Activated naive CD4-positive, alpha-beta T cell treated with anti-CD3 and anti-CD28 coated beads for 36 hours (primary cell): ENCODE measurements at regions of chr3 and their contacts with region 1.

Region 1: DNA sequence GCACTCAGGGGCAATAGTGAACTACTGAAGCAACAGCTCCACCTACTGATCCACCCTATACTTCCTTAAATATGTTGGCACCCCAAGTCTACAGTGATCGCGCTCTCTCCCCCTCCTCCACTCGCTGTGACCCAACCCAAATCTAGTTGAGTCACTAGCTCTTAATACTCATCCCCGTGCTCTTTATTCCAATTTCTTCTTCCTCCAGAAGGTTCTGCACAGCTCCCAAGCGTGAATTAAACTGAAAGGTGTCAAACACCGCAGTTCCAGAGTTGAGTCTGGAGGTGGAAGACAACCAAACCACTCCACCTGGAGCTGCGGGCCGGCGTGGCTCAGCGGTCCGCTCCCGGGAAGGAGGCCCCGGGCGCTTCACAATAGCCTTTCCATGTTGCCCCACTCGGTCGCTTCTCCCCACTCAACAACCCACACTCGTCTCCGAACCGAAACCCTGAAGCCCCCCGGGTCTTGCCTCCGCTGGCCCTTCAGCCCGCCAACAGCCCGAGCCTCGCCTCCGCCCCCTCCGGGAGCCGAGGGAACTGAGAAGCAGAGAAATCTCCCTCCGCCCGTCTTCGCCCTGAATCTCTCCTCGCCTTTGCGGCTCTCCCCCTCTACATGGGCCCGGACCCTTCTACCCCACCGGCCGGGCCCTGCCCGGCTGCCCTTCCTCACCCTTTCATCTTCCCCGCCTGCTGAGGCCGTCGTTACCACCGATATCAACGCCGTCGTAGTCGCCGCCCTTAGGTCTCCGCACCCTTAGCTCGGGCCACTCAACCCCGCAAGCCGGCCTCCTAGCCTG is 578 bp downstream of the NAA50 start:
- DNase-seq: peak; percentile 92
- H3K4me3 Mint-ChIP-seq: peak overlapping the region; percentile 98
- H3K27ac Mint-ChIP-seq: peak overlapping the region; percentile 100
- H3K4me1 Mint-ChIP-seq: peaks cover 63% of the 10 kb centered on the region
- H3K27me3 Mint-ChIP-seq: no peaks in the 10 kb centered on the region

Region 2: DNA sequence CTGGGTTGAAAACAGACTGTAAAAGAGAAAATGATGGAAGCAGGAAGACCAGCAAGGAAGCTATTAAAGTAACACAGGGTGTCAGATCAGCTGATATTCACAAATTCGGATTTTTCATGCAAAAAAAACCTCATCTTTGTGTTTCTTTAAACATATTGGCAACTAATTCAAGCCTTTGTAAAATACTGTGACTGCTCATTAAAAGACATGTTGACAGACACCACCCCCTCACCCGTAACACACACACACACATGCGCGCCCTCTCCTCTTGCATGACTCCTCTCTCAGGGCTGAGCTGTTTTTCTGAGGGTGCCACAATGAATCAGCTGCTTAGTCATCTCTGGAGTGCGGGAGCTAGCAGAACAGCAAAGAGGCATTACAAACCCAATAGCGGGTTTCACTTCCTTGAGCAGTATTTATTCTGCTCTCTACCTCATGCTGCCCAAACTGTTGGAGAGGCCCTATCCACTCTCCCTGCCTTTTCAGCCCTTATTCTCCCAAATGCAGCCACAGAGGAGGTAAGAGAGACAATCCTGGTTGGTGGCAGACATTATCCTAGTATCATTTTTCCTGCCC is 1068.7 kb before region 1 on chr3:
- CTCF ChIA-PET with region 1: no interaction called
- intact Hi-C with region 1: loop called (anchors 10 kb)
- DNase-seq: peak; percentile 97
- H3K4me3 Mint-ChIP-seq: peak overlapping the region; percentile 14
- H3K27ac Mint-ChIP-seq: peak overlapping the region; percentile 54
- H3K4me1 Mint-ChIP-seq: peaks cover 42% of the 10 kb centered on the region
- H3K27me3 Mint-ChIP-seq: peaks cover 14% of the 10 kb centered on the region

Region 3: DNA sequence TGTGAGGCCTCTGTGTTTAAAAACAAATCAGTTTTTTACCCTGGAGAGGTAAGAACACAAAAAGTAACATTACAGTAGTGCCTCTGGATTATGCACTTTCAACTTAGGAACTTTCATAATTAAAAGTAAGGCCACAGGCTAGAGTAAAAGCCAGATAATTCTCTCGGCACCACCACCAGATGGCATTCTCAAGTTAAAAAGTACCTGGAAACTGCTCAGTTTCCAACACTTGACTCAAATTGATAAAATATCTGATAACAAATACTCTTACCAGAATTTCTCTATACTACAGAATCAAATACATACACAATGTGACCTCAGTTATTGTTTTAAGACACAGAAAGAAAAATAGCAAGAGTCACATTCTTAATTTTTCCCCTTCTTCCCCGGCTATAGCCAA is 250.4 kb before region 1 on chr3:
- CTCF ChIA-PET with region 1: interaction called, 6 read pairs
- intact Hi-C with region 1: loop called (anchors 1 kb)
- DNase-seq: peak; percentile 66
- H3K4me3 Mint-ChIP-seq: no peak overlapping the region
- H3K27ac Mint-ChIP-seq: no peak overlapping the region
- H3K4me1 Mint-ChIP-seq: no peaks in the 10 kb centered on the region
- H3K27me3 Mint-ChIP-seq: no peaks in the 10 kb centered on the region

Region 4: DNA sequence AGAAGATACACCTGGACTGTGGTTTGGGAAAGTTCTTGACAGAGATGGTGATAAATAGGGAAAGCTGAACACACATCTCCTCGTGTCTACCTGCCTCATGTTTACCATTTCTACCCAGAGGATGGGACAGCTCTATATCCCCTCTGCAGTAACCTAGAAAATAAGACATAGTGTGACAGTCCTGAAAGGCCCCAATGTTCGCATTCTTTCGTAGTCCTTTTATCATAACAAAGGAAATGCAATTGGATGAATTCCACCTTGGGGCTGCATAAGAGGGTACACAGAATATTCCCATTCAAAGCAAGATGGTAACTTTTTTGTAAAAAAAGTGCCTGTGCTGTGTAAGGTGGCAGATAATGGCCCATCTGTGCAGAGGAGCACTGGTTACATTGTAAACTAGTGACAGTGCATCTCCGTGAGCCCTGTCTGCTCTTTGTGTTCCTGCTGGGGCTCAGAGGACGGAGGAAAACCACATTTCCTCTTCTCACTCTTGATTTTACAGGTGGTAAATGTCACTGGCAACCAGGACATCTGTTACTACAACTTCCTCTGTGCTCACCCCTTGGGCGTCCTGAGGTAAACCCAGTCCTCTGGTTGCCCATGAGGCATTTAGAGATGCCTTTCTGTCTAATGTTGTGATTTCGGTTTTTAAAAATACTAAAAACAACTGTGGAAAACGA is 138.8 kb before region 1 on chr3:
- CTCF ChIA-PET with region 1: interaction called, 3 read pairs
- intact Hi-C with region 1: loop called (anchors 1 kb)
- DNase-seq: peak; percentile 74
- H3K4me3 Mint-ChIP-seq: peak overlapping the region; percentile 27
- H3K27ac Mint-ChIP-seq: peak overlapping the region; percentile 46
- H3K4me1 Mint-ChIP-seq: peaks cover 21% of the 10 kb centered on the region
- H3K27me3 Mint-ChIP-seq: no peaks in the 10 kb centered on the region

Region 5: GRCh38 chr3:113838631-113839209 is 93.2 kb after region 1 on chr3 and contains the start of gene GRAMD1C:
- CTCF ChIA-PET with region 1: interaction called, 7 read pairs
- intact Hi-C with region 1: loop called (anchors 2 kb)
- DNase-seq: peak; percentile 89
- H3K4me3 Mint-ChIP-seq: peak within 1 kb of the TSS; percentile 75
- H3K27ac Mint-ChIP-seq: no peak within 1 kb of the TSS
- H3K4me1 Mint-ChIP-seq: peaks cover 6% of the 10 kb centered on the region
- H3K27me3 Mint-ChIP-seq: no peaks in the 10 kb centered on the region
- total RNA-seq, gene GRAMD1C: 0.67 to 1.3 TPM

Region 6: GRCh38 chr3:114498779-114499370 is 753.4 kb after region 1 on chr3:
- CTCF ChIA-PET with region 1: no interaction called
- intact Hi-C with region 1: loop called (anchors 5 kb)
- DNase-seq: no peak
- H3K4me3 Mint-ChIP-seq: no peak overlapping the region
- H3K27ac Mint-ChIP-seq: no peak overlapping the region
- H3K4me1 Mint-ChIP-seq: peaks cover 36% of the 10 kb centered on the region
- H3K27me3 Mint-ChIP-seq: peaks cover 6% of the 10 kb centered on the region